MCF 10A (cell line): ENCODE measurements at regions of chr11 and their contacts with region 1.

Region 1: GRCh38 chr11:87290304-87290922 is 252.7 kb downstream of the TMEM135 start:
- DNase-seq: peak; percentile 70
- H3K4me3 Mint-ChIP-seq: no peak overlapping the region
- H3K27ac Mint-ChIP-seq: no peak overlapping the region
- H3K4me1 Mint-ChIP-seq: peaks cover 4% of the 10 kb centered on the region
- H3K27me3 Mint-ChIP-seq: no peaks in the 10 kb centered on the region
- CTCF ChIP-seq: peak; percentile 64

Region 2: DNA sequence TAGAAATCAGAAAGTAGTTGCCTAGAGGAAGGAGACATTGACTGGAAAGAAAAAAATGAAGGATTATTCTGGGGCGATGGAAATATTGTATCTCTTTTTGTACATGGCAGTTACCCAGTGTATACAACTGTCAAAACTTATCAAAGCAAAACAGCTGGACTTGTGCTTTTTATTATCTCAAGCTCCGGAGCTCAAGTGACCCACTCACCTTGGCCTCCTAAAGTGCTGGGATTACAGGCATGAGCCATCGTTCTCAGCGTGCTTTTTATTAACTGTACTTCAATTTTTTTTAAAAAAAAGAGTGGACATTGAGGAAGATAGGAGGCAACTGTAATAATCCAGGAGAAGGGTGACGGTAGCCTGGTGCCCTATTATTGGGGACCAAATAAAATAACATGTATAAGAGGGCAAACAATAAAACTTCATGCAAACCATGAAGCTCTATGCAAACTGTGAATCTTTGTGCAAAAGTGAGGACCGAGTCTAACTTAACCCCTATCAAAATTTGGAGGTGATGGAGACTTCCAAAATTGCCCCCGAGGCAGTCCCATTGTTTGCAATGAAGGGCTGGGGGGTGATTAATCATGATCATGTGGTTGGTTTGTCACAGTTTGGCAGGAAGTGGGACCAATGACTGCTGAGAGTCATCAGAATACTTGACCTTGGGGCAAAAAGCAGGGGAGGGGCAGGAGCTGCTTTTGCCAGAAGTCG is 358.7 kb before region 1 on chr11:
- CTCF ChIA-PET with region 1: interaction called, 56 read pairs
- POLR2A ChIA-PET with region 1: interaction called, 3 read pairs
- intact Hi-C with region 1: no loop called
- DNase-seq: peak; percentile 61
- H3K4me3 Mint-ChIP-seq: no peak overlapping the region
- H3K27ac Mint-ChIP-seq: no peak overlapping the region
- H3K4me1 Mint-ChIP-seq: peaks cover 12% of the 10 kb centered on the region
- H3K27me3 Mint-ChIP-seq: no peaks in the 10 kb centered on the region
- CTCF ChIP-seq: no peak

Region 3: DNA sequence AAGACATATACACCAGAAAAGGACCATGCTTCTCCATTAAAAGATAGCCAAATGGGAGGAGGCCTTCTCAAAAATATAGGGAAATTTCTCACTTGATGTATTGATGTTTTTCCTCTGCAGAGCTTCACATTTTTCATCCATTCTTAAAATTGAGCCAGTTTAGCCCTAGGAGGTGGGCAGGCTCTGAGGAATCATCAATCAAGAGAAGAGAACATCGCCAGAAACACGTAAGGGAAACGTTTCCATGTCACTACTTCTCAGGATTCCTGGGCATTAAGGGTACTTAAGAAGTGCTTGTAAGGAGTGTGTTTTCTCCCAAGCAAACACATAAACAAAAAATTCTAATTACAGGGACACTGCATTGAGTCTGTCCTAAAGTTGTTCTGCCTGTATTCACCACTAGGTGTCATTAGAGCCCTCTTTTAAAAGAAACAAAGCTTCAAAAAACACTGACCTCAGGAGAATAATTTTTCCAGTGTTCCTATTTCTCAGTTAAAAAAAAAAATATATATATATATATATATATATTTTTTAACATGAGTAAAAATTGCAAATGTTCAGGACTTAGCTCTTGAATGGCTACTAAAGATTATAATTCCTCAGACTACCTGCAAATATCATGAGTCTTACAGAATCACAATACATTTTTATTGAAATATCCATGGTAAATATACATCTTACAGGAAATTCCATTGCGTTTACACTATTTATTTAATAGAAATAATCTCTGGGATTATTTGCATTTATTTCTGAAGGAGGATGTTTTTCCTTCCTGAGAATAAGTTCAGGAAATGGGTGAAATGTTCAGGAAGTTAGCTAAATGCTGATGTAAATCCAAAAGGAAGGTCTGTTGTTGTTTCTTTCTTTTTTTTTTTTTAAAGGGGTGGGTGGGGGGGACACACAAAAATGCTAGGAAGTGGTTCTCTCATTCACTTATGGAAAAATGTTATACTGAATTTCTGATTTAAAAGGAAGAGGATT is 351.2 kb before region 1 on chr11:
- CTCF ChIA-PET with region 1: interaction called, 56 read pairs
- POLR2A ChIA-PET with region 1: interaction called, 3 read pairs
- intact Hi-C with region 1: loop called (anchors 1 kb)
- DNase-seq: peak; percentile 60
- H3K4me3 Mint-ChIP-seq: no peak overlapping the region
- H3K27ac Mint-ChIP-seq: no peak overlapping the region
- H3K4me1 Mint-ChIP-seq: peaks cover 8% of the 10 kb centered on the region
- H3K27me3 Mint-ChIP-seq: no peaks in the 10 kb centered on the region
- CTCF ChIP-seq: peak; percentile 54

Region 4: DNA sequence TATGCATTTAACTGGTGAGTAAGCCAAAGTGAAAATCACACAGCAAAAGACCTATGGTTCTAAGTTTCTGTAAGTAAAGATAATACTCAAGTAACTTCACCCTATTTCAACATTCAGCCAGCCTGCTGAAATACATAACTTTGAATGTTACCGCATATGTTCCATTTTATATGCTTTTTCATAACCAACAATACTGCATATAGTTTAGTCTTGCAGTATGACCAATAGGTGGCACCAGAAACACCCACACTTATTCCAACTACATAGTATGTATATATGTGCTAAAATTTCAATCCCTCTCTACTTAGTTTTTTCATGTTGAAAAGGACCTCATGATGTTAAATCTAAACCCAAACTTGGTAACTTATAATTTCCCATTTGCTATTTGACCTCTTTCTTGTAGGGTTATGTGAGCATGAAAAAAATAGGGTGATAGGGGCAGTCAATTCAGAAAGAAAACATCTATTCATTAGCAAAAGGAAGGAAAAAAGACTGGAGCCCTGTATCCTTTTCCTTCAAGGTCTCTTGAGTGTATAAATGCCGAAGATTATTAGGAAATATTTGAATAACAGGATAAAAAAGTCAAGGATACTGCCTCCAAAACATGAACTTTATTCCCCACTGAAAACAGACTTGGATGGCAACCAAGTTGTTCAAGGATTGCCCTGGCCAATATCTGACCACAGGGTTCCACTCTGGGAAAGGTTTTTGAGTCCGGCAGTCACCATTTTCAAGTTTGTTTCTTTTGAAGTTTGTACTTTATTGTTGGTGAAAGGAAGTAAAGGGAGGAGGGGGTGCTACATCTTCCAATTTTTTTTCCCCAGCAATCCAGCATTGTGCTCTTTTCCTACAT is 311.4 kb before region 1 on chr11:
- CTCF ChIA-PET with region 1: interaction called, 8 read pairs
- POLR2A ChIA-PET with region 1: no interaction called
- intact Hi-C with region 1: loop called (anchors 1 kb)
- DNase-seq: peak; percentile 60
- H3K4me3 Mint-ChIP-seq: no peak overlapping the region
- H3K27ac Mint-ChIP-seq: no peak overlapping the region
- H3K4me1 Mint-ChIP-seq: peaks cover 12% of the 10 kb centered on the region
- H3K27me3 Mint-ChIP-seq: no peaks in the 10 kb centered on the region
- CTCF ChIP-seq: peak; percentile 66

Region 5: DNA sequence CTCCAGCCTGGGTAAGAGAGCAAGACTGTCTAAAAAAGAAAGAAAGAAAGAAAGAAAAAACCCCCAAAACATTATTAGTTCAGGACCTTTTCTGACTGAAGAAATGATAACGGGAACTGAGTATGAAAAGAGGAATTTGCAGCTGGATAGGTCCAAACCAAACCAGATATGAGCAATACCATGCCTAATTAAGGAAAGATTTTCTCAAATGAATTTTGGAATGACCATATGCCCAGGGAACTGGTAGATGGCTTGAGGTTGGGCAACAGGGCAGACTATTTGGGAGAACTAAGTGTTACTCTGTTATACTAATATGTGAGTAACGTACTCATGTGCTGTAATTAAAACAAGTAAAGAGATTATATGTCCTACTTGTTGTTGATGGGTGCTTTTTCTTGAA is 66.6 kb before region 1 on chr11:
- CTCF ChIA-PET with region 1: no interaction called
- POLR2A ChIA-PET with region 1: no interaction called
- intact Hi-C with region 1: no loop called
- DNase-seq: no peak
- H3K4me3 Mint-ChIP-seq: no peak overlapping the region
- H3K27ac Mint-ChIP-seq: no peak overlapping the region
- H3K4me1 Mint-ChIP-seq: no peaks in the 10 kb centered on the region
- H3K27me3 Mint-ChIP-seq: no peaks in the 10 kb centered on the region
- CTCF ChIP-seq: no peak

Region 6: DNA sequence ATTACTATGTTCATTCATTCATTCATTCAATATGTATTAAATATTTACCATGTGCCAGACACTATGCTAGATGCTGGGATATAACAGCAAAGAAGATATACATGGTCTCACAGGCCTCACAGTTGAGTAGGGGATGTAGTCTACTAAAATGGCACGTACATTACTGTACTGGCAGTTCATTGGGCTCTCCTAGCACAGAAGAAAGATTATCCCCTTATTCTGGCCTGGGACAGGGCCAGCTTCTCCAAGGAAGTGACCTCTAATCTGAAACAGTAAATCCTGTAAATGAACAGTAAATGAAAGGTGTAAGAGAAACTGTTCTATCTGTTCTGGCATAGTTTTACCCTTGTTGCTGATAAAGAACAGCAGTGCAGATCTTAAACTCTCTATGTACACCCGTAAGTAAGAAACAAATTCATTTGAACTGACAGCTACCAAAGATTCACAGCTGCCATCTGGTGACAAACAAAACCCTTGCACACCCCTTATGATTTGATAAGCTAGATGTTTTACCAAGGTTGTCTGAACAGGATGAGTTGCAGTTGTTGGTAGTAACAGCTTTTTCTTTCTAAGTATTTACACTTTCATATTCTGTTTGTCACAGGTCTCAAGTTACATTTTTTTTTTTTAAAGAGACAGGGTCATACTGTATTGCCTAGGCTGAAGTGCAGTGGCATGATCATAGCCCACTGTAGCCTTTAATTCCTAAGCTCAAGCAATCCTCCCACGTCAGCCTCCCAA is 10.4 kb after region 1 on chr11:
- CTCF ChIA-PET with region 1: interaction called, 17 read pairs
- POLR2A ChIA-PET with region 1: no interaction called
- intact Hi-C with region 1: no loop called
- DNase-seq: no peak
- H3K4me3 Mint-ChIP-seq: no peak overlapping the region
- H3K27ac Mint-ChIP-seq: no peak overlapping the region
- H3K4me1 Mint-ChIP-seq: no peaks in the 10 kb centered on the region
- H3K27me3 Mint-ChIP-seq: no peaks in the 10 kb centered on the region
- CTCF ChIP-seq: no peak